ENCODE measurements at regions of chr12 and their contacts with region 1.

Region 1: DNA sequence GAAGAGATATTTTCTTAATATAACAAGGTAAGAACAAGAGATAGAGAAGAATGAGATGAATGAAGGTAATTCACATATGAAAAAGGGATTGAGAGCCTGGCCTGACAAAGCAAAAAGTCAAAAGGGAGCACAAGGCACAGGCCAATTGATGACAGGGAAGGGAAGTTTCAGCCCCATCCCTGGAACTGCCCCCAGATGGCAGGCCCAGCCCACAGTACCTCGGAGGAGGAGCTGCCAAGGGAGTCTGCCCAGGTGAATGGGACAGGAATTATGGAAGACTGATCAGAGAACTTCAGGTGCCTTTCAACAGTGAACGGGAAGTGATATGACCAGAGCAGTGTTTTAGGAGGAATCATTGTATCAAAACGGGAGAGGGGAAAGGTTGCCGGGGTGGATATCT is 15.7 kb downstream of the SNRPF start:
- DNase-seq: no peak
- H3K4me3 ChIP-seq: no peak overlapping the region
- CTCF ChIP-seq: no peak

Region 2: DNA sequence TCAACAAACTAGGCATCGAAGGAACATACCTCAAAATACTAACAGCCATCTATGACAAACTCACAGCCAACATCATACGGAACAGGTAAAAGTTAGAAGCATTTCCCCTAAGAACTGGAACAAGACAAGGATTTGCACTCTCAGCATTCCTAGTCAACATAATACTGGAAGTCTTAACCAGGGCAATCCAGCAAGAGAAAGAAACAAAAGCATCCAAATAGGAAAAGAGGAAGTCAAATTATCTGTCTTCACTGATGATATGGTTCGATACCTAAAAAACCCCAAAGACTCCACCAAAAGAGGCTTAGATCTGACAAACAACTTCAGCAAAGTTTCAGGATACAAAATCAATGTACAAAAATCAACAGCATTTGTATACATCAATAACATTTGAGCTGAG is 35.4 kb after region 1 on chr12:
- in situ Hi-C with region 1: loop called (anchors 5 kb)
- DNase-seq: no peak
- H3K4me3 ChIP-seq: no peak overlapping the region
- CTCF ChIP-seq: no peak

Measured in astrocyte of the cerebellum (primary cell).